PC-9 (cell line): ENCODE measurements at regions of chr3 and their contacts with region 1.

Region 1: DNA sequence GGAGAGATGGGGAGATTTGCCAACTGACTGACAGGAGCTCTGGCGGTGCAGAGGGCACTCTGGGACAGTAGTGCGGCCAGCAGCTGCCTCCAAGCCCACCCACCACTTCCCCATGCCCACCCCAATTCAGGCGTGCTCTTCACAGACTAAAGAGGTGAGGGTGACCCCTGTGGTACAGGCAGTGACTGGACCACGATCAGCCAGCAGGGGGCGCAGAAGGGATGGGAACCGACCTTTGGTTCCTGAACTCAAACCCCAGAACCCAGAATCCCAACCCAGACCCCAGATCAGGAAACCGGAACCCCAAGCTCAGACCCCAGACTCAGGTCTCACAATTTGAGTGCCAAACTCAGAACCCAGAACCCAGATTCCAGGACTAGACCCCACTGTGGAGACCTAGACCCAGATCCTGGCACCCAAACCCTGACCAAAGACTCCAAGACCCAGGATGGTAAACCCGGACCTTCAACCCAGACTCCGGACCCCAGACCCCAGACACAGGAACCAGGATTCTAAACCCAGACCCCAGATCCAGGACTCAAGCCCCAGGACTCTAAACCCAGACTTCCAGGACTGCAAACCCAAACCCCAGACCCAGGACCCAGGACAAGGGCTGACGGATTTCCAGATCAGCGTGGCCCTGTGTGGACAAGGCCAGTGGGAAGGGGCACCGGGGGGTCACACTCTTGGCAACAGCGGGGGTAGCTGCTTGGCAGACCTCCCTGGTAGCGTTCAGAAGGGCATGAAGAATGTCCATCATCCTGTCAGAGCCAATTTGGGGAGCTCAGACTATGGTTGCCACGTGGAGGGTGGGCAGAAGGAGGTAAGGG is 3.7 kb upstream of the MYL3 start:
- DNase-seq: peak in 1 of 2 experiments; percentile 65
- H3K4me3 ChIP-seq: no peak overlapping the region
- H3K27ac ChIP-seq: no peak overlapping the region
- H3K4me1 ChIP-seq: no peaks in the 10 kb centered on the region
- H3K27me3 ChIP-seq: no peaks in the 10 kb centered on the region
- CTCF ChIP-seq: peak; percentile 90

Region 2: GRCh38 chr3:46845791-46846623 is 20.9 kb before region 1 on chr3:
- CTCF ChIA-PET with region 1: interaction called, 12 read pairs
- POLR2A ChIA-PET with region 1: no interaction called
- intact Hi-C with region 1: no loop called
- DNase-seq: peak in 1 of 2 experiments; percentile 88
- H3K4me3 ChIP-seq: peak overlapping the region; percentile 59; the same call in 1 of the 2 replicates
- H3K27ac ChIP-seq: no peak overlapping the region
- H3K4me1 ChIP-seq: 0 out of 2 replicates have a peak, but pooled peaks cover 5% of the 10 kb centered on the region
- H3K27me3 ChIP-seq: no peaks in the 10 kb centered on the region
- CTCF ChIP-seq: peak; percentile 48; the same call in 1 of the 2 replicates

Region 3: DNA sequence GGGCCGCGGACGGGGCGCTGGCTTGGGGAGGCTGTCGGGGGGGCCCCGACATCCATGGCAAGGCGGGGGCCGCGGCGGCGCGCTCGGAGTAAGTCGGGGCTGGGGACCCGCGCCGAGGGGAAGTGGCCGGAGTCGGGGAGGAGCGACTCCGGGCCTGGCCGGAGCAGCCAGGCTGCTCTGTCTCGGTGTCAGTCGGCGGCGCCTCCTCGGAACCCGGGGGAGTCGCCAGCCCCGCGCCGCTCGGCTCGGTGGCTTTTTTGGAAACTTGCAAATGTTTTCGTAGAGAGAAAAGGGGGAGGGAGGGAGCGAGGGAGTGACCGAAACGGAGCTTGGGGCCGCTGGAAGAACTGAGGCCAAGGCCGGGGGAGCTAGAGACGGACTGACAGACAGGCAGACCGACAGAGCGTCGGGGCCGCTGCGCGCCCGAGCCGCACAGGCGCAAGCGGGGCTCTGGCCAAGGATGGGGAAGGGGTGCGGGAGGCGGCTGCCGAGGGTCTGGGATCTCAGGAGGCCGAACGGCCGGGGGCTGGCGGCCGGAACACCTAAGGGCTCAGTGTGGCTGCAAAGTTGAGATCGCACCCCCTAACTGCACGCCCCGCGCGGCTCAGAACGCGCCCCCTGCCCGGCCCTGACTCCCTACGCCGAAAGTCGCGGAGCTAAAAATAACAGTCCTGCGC is 15.6 kb after region 1 on chr3:
- CTCF ChIA-PET with region 1: no interaction called
- POLR2A ChIA-PET with region 1: interaction called, 10 read pairs
- intact Hi-C with region 1: no loop called
- DNase-seq: no peak
- H3K4me3 ChIP-seq: no peak overlapping the region; the same call in 1 of the 2 replicates
- H3K27ac ChIP-seq: no peak overlapping the region
- H3K4me1 ChIP-seq: peaks cover 12% of the 10 kb centered on the region
- H3K27me3 ChIP-seq: peaks cover 35% of the 10 kb centered on the region
- CTCF ChIP-seq: no peak

Region 4: DNA sequence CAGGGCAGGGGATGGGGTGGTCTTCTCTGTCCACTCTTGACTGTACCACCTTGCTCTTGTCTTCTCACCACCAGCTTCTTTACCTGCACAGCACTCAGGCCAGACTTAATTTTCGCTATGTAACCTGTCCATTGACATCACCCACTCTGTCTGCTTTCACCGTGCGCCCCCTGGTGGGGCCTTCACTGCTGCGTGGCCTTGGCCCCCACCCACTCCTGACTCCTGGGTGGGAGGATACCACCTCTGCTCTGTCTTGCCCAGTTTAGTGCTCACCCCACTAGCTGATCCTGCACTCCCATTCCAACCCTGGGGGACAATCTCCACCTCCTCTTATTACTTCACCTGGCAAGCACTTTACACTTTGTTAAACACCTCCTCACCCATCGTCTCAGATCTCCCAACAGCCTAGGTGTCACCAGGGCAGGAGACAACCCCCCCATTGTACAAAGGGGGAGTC is 28.3 kb after region 1 on chr3:
- CTCF ChIA-PET with region 1: no interaction called
- POLR2A ChIA-PET with region 1: no interaction called
- intact Hi-C with region 1: loop called (anchors 1 kb)
- DNase-seq: peak in 1 of 2 experiments; percentile 68
- H3K4me3 ChIP-seq: no peak overlapping the region
- H3K27ac ChIP-seq: no peak overlapping the region
- H3K4me1 ChIP-seq: 0 out of 2 replicates have a peak, but pooled peaks cover 4% of the 10 kb centered on the region
- H3K27me3 ChIP-seq: no peaks in the 10 kb centered on the region
- CTCF ChIP-seq: peak; percentile 86